ENCODE measurements at regions of chr3 and their contacts with region 1.

Region 1: GRCh38 chr3:56915966-56916586 is 114.3 kb upstream of the ARHGEF3 start:
- DNase-seq: peak; percentile 71 to 89 (median 78)
- H3K4me3 ChIP-seq: peak overlapping the region; percentile 90 to 92
- H3K4me3 Mint-ChIP-seq: peak overlapping the region; percentile 91 to 96 (median 94)
- H3K27ac ChIP-seq: peak overlapping the region; percentile 78
- H3K27ac Mint-ChIP-seq: peak overlapping the region; percentile 92 to 98 (median 94)
- H3K4me1 ChIP-seq: peaks cover 77% of the 10 kb centered on the region
- H3K4me1 Mint-ChIP-seq: peaks cover 64 to 92% (median 72%) of the 10 kb centered on the region in 4 donors
- H3K27me3 ChIP-seq: no peaks in the 10 kb centered on the region
- H3K27me3 Mint-ChIP-seq: no peaks in the 10 kb centered on the region

Region 2: GRCh38 chr3:56556908-56557830 is 358.9 kb before region 1 on chr3 and contains the start of gene CCDC66:
- CTCF ChIA-PET with region 1: no interaction called
- POLR2A ChIA-PET with region 1: interaction called, 5 read pairs
- intact Hi-C with region 1: loop called (anchors 5 kb)
- DNase-seq: peak; percentile 92 to 95 (median 93)
- H3K4me3 ChIP-seq: peak within 1 kb of the TSS; percentile 90 to 91
- H3K4me3 Mint-ChIP-seq: peak within 1 kb of the TSS; percentile 95 to 100 (median 99)
- H3K27ac ChIP-seq: peak within 1 kb of the TSS; percentile 91
- H3K27ac Mint-ChIP-seq: peak within 1 kb of the TSS; percentile 98 to 100 (median 99)
- H3K4me1 ChIP-seq: peaks cover 24% of the 10 kb centered on the region
- H3K4me1 Mint-ChIP-seq: peaks cover 15 to 42% (median 29%) of the 10 kb centered on the region in 4 donors
- H3K27me3 ChIP-seq: no peaks in the 10 kb centered on the region
- H3K27me3 Mint-ChIP-seq: no peaks in the 10 kb centered on the region
- total RNA-seq, gene CCDC66: 93.4 to 104 TPM

Region 3: GRCh38 chr3:56812754-56813650 is 103.1 kb before region 1 on chr3:
- CTCF ChIA-PET with region 1: interaction called, 16 read pairs
- POLR2A ChIA-PET with region 1: interaction called, 193 read pairs
- intact Hi-C with region 1: no loop called
- DNase-seq: no peak
- H3K4me3 ChIP-seq: peak overlapping the region in 1 of 2 donors; percentile 27
- H3K4me3 Mint-ChIP-seq: peak overlapping the region; percentile 39 to 88 (median 73)
- H3K27ac ChIP-seq: peak overlapping the region; percentile 28
- H3K27ac Mint-ChIP-seq: peak overlapping the region; percentile 81 to 96 (median 88)
- H3K4me1 ChIP-seq: peaks cover 81% of the 10 kb centered on the region
- H3K4me1 Mint-ChIP-seq: peaks cover 67 to 85% (median 76%) of the 10 kb centered on the region in 4 donors
- H3K27me3 ChIP-seq: no peaks in the 10 kb centered on the region
- H3K27me3 Mint-ChIP-seq: no peaks in the 10 kb centered on the region

Region 4: DNA sequence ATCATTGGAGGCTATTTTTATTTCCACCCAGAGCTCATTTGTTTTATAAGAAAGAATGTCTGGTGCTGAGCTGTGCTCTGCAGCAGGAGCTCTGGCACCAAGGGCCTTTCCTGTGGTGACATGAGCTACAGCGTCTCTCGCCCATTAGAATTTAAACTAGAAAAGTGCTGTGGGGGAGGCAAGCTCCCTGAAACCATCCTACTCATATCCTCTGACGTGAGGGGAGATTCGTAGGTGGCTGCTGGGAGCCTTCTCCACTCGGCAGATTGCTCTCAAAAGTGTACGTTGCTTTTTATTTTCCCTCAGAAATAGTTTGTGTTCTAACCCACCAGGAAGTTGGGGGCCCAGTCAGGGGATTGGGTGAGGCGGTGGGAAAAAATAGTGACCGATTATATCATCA is 38.0 kb before region 1 on chr3:
- CTCF ChIA-PET with region 1: interaction called, 3 read pairs
- POLR2A ChIA-PET with region 1: interaction called, 82 read pairs
- intact Hi-C with region 1: loop called (anchors 5 kb)
- DNase-seq: peak in 4 of 5 donors; percentile 38 to 63 (median 41)
- H3K4me3 ChIP-seq: peak overlapping the region in 1 of 2 donors; percentile 19
- H3K4me3 Mint-ChIP-seq: peak overlapping the region; percentile 21 to 86 (median 74)
- H3K27ac ChIP-seq: peak overlapping the region; percentile 48
- H3K27ac Mint-ChIP-seq: peak overlapping the region; percentile 74 to 93 (median 89)
- H3K4me1 ChIP-seq: peaks cover 53% of the 10 kb centered on the region
- H3K4me1 Mint-ChIP-seq: peaks cover 55 to 86% (median 72%) of the 10 kb centered on the region in 4 donors
- H3K27me3 ChIP-seq: no peaks in the 10 kb centered on the region
- H3K27me3 Mint-ChIP-seq: no peaks in the 10 kb centered on the region

Region 5: DNA sequence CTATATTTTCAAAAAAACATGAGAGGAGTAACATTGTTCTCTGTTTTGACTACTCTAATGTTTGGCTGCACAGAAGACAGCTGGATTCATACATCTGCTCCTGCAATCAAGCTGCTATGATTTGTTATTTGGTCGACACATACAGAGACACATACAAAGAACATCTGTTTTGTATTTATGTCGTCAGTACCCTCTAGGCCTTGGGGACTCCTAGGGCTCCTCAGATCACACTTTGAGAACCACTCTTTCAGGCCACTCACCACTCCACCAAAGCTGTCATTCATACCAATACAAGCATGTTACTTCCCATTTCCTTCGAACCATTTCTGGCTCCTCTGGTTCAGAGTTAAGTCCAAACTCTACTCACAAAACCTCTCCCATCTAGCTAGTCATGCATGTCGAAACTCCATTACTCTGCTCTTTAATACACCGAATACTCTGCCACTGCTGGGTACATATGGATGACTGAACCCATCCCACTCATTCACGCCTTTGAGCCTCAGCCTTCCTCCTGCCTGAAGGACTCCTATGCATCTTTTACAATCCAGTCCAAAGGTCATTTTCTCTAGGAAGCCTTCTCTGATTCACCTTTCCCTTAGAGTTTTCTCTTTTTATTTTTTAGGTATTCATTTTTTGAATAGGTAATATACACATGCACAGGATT is 11.4 kb before region 1 on chr3:
- CTCF ChIA-PET with region 1: interaction called, 6 read pairs
- POLR2A ChIA-PET with region 1: interaction called, 52 read pairs
- intact Hi-C with region 1: loop called (anchors 2 kb)
- DNase-seq: no peak
- H3K4me3 ChIP-seq: no peak overlapping the region
- H3K4me3 Mint-ChIP-seq: peak overlapping the region in 3 of 8 donors; percentile 17 to 57 (median 24)
- H3K27ac ChIP-seq: no peak overlapping the region
- H3K27ac Mint-ChIP-seq: peak overlapping the region in 4 of 7 donors; percentile 23 to 74 (median 44)
- H3K4me1 ChIP-seq: peaks cover 65% of the 10 kb centered on the region
- H3K4me1 Mint-ChIP-seq: peaks cover 63 to 79% (median 68%) of the 10 kb centered on the region in 4 donors
- H3K27me3 ChIP-seq: no peaks in the 10 kb centered on the region
- H3K27me3 Mint-ChIP-seq: no peaks in the 10 kb centered on the region

Region 6: GRCh38 chr3:56997675-56998074 is 81.6 kb after region 1 on chr3:
- CTCF ChIA-PET with region 1: interaction called, 10 read pairs
- POLR2A ChIA-PET with region 1: no interaction called
- intact Hi-C with region 1: no loop called
- DNase-seq: no peak
- H3K4me3 ChIP-seq: no peak overlapping the region
- H3K4me3 Mint-ChIP-seq: no peak overlapping the region
- H3K27ac ChIP-seq: no peak overlapping the region
- H3K27ac Mint-ChIP-seq: peak overlapping the region in 1 of 7 donors; percentile 90
- H3K4me1 ChIP-seq: no peaks in the 10 kb centered on the region
- H3K4me1 Mint-ChIP-seq: peaks cover 3 to 6% (median 4%) of the 10 kb centered on the region in 4 donors
- H3K27me3 ChIP-seq: no peaks in the 10 kb centered on the region
- H3K27me3 Mint-ChIP-seq: peaks cover 1 to 3% of the 10 kb centered on the region in 2 donors

Region 7: GRCh38 chr3:57397175-57398026 is 481.3 kb after region 1 on chr3:
- CTCF ChIA-PET with region 1: no interaction called
- POLR2A ChIA-PET with region 1: no interaction called
- intact Hi-C with region 1: no loop called
- DNase-seq: peak; percentile 56 to 72 (median 64)
- H3K4me3 ChIP-seq: no peak overlapping the region
- H3K4me3 Mint-ChIP-seq: peak overlapping the region in 7 of 8 donors; percentile 0 to 71 (median 31)
- H3K27ac ChIP-seq: no peak overlapping the region
- H3K27ac Mint-ChIP-seq: peak overlapping the region in 6 of 7 donors; percentile 33 to 72 (median 46)
- H3K4me1 ChIP-seq: peaks cover 7% of the 10 kb centered on the region
- H3K4me1 Mint-ChIP-seq: peaks cover 6 to 12% (median 9%) of the 10 kb centered on the region in 4 donors
- H3K27me3 ChIP-seq: no peaks in the 10 kb centered on the region
- H3K27me3 Mint-ChIP-seq: peaks cover 5 to 8% of the 10 kb centered on the region in 2 donors

Measured in CD4-positive, alpha-beta memory T cell (primary cell).